ENCODE measurements at regions of chr5 and their contacts with region 1.

Region 1: GRCh38 chr5:125209650-125210049 is 463.2 kb upstream of the ZNF608 start:
- DNase-seq: no peak
- ATAC-seq: no peak
- H3K4me3 ChIP-seq: no peak overlapping the region
- H3K27ac ChIP-seq: no peak overlapping the region
- H3K4me1 ChIP-seq: no peaks in the 10 kb centered on the region
- H3K27me3 ChIP-seq: no peaks in the 10 kb centered on the region
- CTCF ChIP-seq: no peak
- EP300 ChIP-seq: no peak
- POLR2A ChIP-seq: no peak
- RAD21 ChIP-seq: no peak

Region 2: DNA sequence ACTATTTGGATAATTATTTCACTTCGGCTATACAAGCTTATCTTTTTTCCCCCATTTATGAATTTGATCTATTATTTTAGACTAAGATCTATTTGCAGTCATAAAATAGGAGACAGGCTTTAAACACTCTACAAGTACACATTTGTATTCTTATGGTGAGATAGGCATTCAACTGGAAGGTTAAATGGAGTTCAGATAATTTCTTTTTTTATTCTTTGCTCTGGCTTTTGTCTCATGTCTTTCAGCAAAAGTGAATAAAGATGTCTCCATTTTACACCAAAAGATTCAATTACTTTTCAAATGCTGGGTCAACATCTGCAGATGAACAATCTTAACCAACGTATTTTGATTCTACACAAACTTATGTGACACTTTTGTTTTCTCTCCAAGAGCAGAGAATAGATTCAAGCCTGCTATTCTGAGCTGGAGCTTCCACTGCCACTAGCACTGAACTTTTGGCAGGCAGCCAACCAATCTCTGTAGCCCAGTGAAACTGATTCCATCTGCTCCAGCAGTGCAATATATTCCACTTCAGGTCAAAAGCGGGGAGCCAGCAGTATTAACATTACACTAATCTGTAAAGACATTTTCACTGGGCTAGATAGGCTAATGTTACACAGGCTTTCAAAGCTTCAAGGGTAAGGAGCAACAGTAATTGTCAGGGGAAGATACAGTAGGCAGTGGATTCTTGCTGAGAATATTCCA is 11.2 kb before region 1 on chr5:
- CTCF ChIA-PET with region 1: no interaction called
- POLR2A ChIA-PET with region 1: interaction called, 3 read pairs
- RAD21 ChIA-PET with region 1: interaction called, 4 read pairs
- SMC1A ChIA-PET with region 1: interaction called, 14 read pairs
- in situ Hi-C with region 1: no loop called
- intact Hi-C with region 1: no loop called
- DNase-seq: no peak
- ATAC-seq: no peak
- H3K4me3 ChIP-seq: no peak overlapping the region
- H3K27ac ChIP-seq: no peak overlapping the region
- H3K4me1 ChIP-seq: no peaks in the 10 kb centered on the region
- H3K27me3 ChIP-seq: no peaks in the 10 kb centered on the region
- CTCF ChIP-seq: no peak
- EP300 ChIP-seq: no peak
- POLR2A ChIP-seq: no peak
- RAD21 ChIP-seq: no peak